Dorsolateral prefrontal cortex (tissue), 120 donors: ENCODE measurements at regions of chr1 and their contacts with region 1.

Region 1: DNA sequence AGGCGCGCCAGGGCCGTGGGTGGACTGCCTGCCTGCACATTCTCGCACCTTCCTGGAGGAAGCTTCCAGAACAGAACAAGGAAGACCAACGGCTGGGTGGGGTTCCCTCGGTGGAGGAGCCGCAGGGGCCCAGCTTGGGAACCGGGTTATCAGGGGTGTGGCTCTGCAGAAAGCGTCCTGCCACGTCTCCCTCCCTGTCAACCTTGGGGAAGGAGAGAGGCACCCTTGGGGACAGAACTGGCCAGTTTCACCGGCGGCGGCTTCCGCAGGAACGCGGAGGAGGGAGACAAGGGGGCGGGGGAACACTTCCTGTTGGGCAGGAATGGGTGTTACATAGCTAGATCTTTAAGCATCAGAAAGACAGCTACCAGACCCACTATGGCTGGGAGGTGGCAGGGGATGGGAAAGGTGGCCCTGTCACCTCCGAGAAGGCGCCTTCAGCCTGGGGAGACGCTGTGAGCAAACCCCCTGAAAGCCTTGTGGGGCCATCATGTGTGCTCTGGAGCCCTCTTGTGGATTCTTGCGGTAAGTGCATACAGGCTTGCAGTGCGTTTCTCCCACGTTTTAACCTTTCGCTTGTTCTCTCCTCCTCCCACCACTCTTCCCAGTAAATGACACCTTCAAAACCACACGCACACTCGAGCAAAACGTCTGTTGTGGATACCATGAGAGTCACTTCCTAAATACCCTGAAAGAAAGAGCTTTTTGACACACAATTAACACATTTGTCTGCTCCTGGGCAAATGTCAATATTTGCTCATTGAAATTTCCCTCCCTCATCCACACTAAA is 3.8 kb upstream of the PLEKHA6 start:
- DNase-seq: peak in 6 of 10 donors; percentile 61 to 78 (median 69)
- H3K4me3 ChIP-seq: peak overlapping the region; percentile 29 to 73 (median 56)
- H3K27ac ChIP-seq: peak overlapping the region in 57 of 59 donors; percentile 9 to 94 (median 79)
- H3K27me3 ChIP-seq: no peaks in the 10 kb centered on the region
- CTCF ChIP-seq: peak; percentile 94 to 100 (median 98)

Region 2: DNA sequence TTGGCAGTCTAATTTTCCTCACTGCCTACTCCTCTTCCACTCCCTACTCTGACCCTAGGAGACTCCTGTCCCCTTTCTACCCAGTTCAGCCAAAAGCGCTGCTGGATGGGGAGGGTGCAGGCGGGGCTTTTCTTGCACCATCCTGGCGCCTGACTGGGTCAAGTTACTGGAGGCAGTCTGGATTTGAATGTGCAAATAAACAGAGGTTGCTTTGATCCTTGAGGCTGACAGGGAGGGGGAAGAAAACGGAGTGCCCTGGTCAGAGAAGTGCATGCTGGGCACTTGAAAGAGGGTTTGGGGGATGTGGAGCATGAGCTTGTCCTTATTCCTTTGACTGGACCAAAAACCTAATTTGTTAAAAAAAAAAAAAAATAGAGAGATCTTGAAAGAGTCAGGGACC is 367.4 kb before region 1 on chr1:
- intact Hi-C with region 1: loop called in 1 of 2 experiments (anchors 10 kb)
- DNase-seq: peak in 8 of 10 donors; percentile 6 to 59 (median 50)
- H3K4me3 ChIP-seq: peak overlapping the region in 12 of 59 donors; percentile 4 to 42 (median 16)
- H3K27ac ChIP-seq: peak overlapping the region in 51 of 59 donors; percentile 2 to 83 (median 69)
- H3K27me3 ChIP-seq: no peaks in the 10 kb centered on the region
- CTCF ChIP-seq: no peak

Region 3: GRCh38 chr1:204162231-204163074 is 201.1 kb before region 1 on chr1:
- intact Hi-C with region 1: loop called (anchors 1 to 5 kb)
- DNase-seq: peak; percentile 72 to 87 (median 80)
- H3K4me3 ChIP-seq: no peak overlapping the region
- H3K27ac ChIP-seq: no peak overlapping the region
- H3K27me3 ChIP-seq: no peaks in the 10 kb centered on the region
- CTCF ChIP-seq: peak; percentile 82 to 100 (median 98)

Region 4: GRCh38 chr1:204257954-204258752 is 105.4 kb before region 1 on chr1:
- intact Hi-C with region 1: loop called (anchors 2 to 5 kb)
- DNase-seq: peak in 9 of 10 donors; percentile 35 to 84 (median 75)
- H3K4me3 ChIP-seq: no peak overlapping the region
- H3K27ac ChIP-seq: peak overlapping the region in 35 of 59 donors; percentile 10 to 75 (median 44)
- H3K27me3 ChIP-seq: no peaks in the 10 kb centered on the region
- CTCF ChIP-seq: peak; percentile 46 to 91 (median 79)

Region 5: DNA sequence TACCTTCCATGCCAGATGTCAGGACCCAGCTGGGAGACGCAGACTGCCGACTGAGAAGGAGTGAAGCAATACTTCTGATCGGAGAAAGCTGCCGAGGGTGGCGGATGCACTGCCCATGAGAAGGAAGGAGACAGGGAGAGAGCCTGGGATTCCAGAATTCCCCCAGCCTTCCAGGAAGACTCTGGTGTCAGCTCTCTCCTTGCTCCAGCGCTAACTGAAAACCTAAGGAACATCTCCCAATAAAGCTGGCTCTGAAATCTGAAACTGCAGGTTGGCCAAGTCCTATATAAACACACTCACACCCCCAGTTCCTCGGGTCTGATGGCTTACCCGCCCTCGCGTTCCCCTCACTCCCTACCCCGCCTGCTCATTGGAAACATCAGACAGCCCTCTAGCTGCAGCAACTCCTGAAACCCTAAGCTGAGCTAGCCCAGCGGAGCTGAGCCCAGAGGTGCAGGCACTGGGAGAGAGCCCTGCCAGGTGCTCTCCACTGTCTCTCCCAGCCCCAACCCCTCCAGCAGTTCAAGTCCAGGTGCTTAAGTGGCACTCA is 56.1 kb before region 1 on chr1:
- intact Hi-C with region 1: loop called (anchors 2 to 5 kb)
- DNase-seq: peak in 6 of 10 donors; percentile 62 to 78 (median 70)
- H3K4me3 ChIP-seq: peak overlapping the region in 52 of 59 donors; percentile 7 to 65 (median 40)
- H3K27ac ChIP-seq: peak overlapping the region in 39 of 59 donors; percentile 0 to 81 (median 43)
- H3K27me3 ChIP-seq: no peaks in the 10 kb centered on the region
- CTCF ChIP-seq: peak in 37 of 56 donors; percentile 10 to 51 (median 26)

Region 6: DNA sequence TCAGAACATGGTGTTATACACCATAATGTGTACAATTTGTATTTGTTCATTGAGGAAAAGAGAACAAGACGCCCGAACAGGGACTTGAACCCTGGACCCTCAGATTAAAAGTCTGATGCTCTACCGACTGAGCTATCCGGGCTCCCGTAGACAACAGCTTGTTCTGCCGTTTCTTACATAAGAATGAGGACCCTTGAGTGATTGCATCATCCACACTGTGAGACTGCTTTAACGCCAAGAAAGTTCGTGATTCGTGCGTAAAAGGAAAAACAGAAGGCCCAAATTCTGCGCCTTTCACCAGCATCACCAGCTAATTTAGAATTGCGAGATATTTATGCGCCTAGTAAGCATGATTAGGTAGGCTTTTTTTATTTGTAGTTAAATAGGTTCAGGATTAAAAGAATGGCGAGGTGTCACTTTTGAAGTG is 143.4 kb after region 1 on chr1:
- intact Hi-C with region 1: loop called in 1 of 2 experiments (anchors 5 kb)
- DNase-seq: peak in 8 of 10 donors; percentile 66 to 87 (median 79)
- H3K4me3 ChIP-seq: peak overlapping the region; percentile 51 to 96 (median 73)
- H3K27ac ChIP-seq: peak overlapping the region; percentile 66 to 100 (median 96)
- H3K27me3 ChIP-seq: no peaks in the 10 kb centered on the region
- CTCF ChIP-seq: peak in 5 of 56 donors; percentile 6 to 24 (median 13)